ENCODE measurements at regions of chrX and their contacts with region 1.

Region 1: DNA sequence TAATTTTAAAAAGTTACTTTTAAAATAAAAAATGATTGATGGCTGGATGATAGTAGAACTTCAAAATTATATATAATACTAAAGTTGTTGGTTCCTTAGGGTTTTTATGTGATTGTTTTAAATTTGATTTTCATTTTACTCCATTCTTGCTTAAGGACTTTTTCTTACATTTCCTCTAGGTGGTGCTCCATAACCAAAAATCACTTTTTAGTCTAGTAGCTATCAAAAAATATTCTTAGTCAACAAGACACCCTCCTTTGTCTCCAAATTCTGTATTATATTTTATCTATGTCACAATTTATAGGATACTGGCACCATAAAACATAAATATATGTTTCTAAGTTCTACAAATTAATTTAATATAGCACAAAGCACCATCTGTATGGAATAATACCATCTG is 67.2 kb upstream of the BRWD3 start:
- DNase-seq: no peak

Region 2: GRCh38 chrX:81195712-81196111 is 318.8 kb after region 1 on chrX:
- intact Hi-C with region 1: loop called (anchors 10 kb)
- DNase-seq: no peak

Measured in cardiac septum (tissue), 1 donor.